ENCODE measurements at regions of chr5 and their contacts with region 1.

Region 1: DNA sequence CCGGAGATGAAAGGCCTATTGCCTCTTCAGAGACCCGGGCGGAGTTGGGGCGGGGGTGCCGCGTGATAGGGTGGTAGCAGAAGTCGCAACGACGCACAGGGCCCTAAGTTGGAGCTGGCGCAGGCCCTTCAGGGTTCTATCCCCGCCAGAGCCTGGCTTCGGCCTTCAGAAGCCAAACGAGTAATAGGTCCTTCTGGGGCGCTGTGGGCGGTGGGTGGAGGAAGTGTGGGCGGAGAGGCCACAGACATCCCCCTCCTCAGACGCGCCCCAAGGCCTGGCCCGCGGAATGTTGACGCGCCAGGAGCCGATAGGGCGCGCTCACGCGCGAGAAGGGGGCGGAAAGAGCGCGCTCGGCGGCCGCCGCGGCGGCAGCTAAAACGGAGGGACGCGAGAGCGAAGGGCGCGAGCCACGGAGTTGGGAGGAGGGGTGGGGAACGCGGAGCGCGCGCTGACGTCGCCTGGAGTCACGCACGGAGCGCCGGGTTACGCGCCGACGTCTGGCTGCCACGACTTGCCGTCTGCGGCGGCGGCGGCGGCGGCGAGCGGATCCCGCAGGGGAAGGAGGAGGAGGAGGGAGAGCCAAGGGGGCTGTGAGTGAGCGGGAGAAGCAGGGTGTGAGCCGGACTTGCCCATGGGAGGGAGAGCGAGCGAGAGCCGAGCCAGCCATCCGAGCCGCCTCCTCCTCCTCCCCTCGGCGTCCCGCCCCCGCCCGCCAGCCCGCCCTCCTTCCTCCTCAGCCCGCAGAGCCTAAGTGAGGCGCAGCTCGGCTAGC is 6.4 kb upstream of the PURA start:
- DNase-seq: peak; percentile 95
- H3K4me3 Mint-ChIP-seq: peak overlapping the region; percentile 97
- H3K27ac Mint-ChIP-seq: peak overlapping the region; percentile 98
- H3K4me1 Mint-ChIP-seq: peaks cover 45% of the 10 kb centered on the region
- H3K27me3 Mint-ChIP-seq: no peaks in the 10 kb centered on the region
- CTCF ChIP-seq: no peak

Region 2: DNA sequence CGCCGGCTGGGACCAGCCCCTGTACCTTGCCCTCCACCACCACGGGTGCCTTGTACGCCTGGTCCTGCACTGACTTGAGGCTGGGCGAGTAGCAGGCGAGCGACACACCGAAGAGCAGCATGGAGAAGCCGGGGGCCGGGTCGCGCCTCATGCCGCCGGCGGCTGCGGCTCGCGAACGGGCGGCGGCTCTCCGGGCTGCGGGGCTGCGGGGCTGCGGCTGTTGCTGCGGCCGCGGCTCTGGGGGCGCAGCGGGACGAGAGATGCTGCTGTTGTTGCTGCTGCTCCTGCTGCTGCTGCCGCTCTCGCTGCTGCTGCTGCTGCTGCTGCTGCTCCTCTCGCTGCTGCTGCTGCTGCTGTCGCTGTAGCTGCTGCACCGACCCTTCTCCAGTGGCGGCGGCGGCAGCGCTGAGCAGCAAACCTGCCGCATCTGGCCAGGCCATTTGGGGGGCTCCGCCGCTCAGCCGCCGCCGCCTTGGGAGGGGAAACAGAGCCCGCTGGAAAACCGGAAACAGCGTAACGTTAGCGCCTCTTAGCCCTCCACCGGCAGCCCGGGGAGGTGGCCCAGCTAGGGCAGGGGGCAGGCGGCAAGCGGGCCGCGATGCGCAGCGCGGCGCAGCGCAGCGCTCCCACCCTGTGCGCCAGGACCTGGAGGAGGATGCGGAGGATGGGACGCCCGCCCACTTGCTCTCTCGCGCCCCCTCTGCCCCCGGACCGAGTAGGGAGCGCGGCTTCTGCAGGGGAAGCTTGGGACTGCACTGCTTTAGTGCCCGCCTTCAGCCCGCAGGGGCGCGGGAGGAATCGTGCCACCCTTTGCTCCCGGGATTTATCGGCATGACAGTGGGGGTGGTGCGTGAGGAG is 64.6 kb before region 1 on chr5 and contains the start of gene NRG2:
- CTCF ChIA-PET with region 1: interaction called, 3 read pairs
- POLR2A ChIA-PET with region 1: interaction called, 16 read pairs
- intact Hi-C with region 1: no loop called
- DNase-seq: peak; percentile 63
- H3K4me3 Mint-ChIP-seq: peak within 1 kb of the TSS; percentile 69
- H3K27ac Mint-ChIP-seq: no peak within 1 kb of the TSS
- H3K4me1 Mint-ChIP-seq: peaks cover 32% of the 10 kb centered on the region
- H3K27me3 Mint-ChIP-seq: peaks cover 23% of the 10 kb centered on the region
- CTCF ChIP-seq: peak; percentile 57
- total RNA-seq, gene NRG2: 0.23 TPM in 1 of 2 replicates, not detected in the other

Region 3: GRCh38 chr5:140131967-140132409 is 24.5 kb after region 1 on chr5:
- CTCF ChIA-PET with region 1: interaction called, 4 read pairs
- POLR2A ChIA-PET with region 1: interaction called, 26 read pairs
- intact Hi-C with region 1: no loop called
- DNase-seq: peak; percentile 88
- H3K4me3 Mint-ChIP-seq: no peak overlapping the region
- H3K27ac Mint-ChIP-seq: peak overlapping the region; percentile 44
- H3K4me1 Mint-ChIP-seq: peaks cover 12% of the 10 kb centered on the region
- H3K27me3 Mint-ChIP-seq: no peaks in the 10 kb centered on the region
- CTCF ChIP-seq: no peak

Region 4: GRCh38 chr5:140140435-140140834 is 32.9 kb after region 1 on chr5:
- CTCF ChIA-PET with region 1: interaction called, 26 read pairs
- POLR2A ChIA-PET with region 1: interaction called, 16 read pairs
- intact Hi-C with region 1: no loop called
- DNase-seq: peak; percentile 43
- H3K4me3 Mint-ChIP-seq: no peak overlapping the region
- H3K27ac Mint-ChIP-seq: no peak overlapping the region
- H3K4me1 Mint-ChIP-seq: peaks cover 22% of the 10 kb centered on the region
- H3K27me3 Mint-ChIP-seq: no peaks in the 10 kb centered on the region
- CTCF ChIP-seq: no peak

Region 5: DNA sequence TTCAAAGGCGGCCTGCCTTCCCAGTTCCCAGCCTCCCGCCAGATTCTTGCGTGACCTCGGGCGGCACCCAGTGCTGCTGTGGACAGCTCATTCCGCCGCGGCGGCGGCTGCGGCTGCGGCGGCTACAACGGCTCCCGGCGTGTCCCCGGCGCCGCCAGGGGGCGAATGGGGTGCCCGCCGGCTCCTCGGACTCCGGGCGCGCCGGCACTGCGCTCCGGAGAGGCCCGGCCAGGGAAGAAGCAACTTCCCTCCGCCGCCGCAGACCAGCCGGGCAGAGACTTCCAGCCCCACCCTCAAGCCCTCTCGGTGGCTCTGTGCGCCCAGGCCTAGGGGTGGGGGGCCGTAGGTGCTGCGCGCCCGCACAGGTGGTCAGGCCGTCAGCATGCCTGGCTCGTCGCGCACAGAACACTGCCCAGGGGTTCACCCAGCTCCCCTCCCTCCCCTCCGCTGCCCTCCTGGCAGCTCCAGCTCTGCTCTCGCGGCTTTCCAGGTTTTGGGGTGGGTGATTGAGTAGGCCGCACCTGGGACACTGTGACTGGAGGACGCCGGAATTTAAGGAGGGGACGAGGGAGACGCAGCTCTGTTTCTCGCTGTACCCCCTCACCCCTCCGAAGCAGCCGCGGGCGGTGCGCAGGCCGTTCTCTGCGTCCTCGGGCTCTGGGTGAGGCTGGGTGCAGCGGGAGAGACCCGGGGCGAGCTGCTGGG is 38.5 kb after region 1 on chr5:
- CTCF ChIA-PET with region 1: interaction called, 26 read pairs
- POLR2A ChIA-PET with region 1: interaction called, 16 read pairs
- intact Hi-C with region 1: no loop called
- DNase-seq: peak; percentile 39
- H3K4me3 Mint-ChIP-seq: no peak overlapping the region
- H3K27ac Mint-ChIP-seq: no peak overlapping the region
- H3K4me1 Mint-ChIP-seq: peaks cover 11% of the 10 kb centered on the region
- H3K27me3 Mint-ChIP-seq: no peaks in the 10 kb centered on the region
- CTCF ChIP-seq: peak; percentile 44

Region 6: DNA sequence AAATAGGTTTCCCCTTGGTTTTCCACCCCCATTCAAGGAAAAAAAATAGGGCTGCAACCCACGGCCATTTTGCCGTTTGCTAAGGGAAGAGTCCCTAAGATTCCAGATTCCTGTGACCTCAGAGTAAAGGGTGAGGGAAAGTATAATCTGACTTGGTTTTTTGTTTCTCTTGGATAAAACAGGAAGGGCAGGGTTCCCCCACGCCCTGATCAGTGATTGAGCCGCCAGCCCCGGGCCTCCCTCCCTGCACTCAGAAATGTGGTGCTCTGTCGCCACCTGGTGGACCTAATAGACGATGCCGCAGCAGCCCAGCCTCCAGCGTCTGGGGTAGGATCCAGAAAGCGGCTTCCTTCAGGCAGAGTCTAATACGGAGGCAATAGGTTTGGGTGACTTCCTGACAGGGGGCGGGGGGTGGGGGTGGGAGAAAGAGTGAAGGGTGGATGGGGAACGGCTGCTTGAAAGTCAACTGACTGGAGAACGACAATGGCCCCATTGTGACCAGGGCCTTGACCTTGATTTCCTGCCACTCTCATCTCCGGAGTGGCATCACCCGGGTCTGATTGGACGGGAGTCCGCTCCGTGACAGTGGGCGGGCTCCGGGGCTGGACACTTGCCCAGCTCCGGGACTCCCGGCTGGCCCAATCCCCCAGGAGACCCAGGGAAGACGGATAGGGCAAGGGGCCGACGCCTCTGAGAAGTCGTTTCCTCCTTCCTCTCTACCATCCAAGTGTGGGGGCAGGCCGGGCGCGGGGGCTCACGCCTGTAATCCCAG is 49.7 kb after region 1 on chr5:
- CTCF ChIA-PET with region 1: interaction called, 14 read pairs
- POLR2A ChIA-PET with region 1: interaction called, 5 read pairs
- intact Hi-C with region 1: no loop called
- DNase-seq: peak; percentile 93
- H3K4me3 Mint-ChIP-seq: peak overlapping the region; percentile 62
- H3K27ac Mint-ChIP-seq: peak overlapping the region; percentile 9
- H3K4me1 Mint-ChIP-seq: peaks cover 9% of the 10 kb centered on the region
- H3K27me3 Mint-ChIP-seq: no peaks in the 10 kb centered on the region
- CTCF ChIP-seq: peak; percentile 97